ENCODE measurements at regions of chr5 and their contacts with region 1.

Region 1: GRCh38 chr5:122076664-122077365 is 1.2 kb downstream of the LOX start:
- DNase-seq: peak; percentile 94
- H3K4me3 Mint-ChIP-seq: peak overlapping the region; percentile 94
- H3K27ac Mint-ChIP-seq: peak overlapping the region; percentile 74
- H3K4me1 Mint-ChIP-seq: peaks cover 24% of the 10 kb centered on the region
- H3K27me3 Mint-ChIP-seq: no peaks in the 10 kb centered on the region
- CTCF ChIP-seq: peak; percentile 96

Region 2: DNA sequence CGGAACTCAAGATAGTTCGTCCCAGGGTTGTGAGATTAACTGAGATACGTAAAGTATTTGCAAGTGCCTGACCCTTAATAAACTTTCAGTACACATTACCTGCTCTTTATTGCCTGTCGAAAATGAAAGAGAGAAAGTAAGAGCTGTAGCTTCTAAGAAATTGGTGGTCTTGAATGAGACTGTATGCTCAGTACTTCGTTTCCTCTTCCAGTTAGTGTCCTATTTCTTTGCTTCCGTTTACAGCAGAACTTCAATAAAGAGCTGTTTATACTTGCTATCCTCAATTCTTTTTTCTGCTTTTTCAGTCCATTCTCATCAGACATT is 114.5 kb before region 1 on chr5:
- CTCF ChIA-PET with region 1: interaction called, 48 read pairs
- POLR2A ChIA-PET with region 1: interaction called, 84 read pairs
- intact Hi-C with region 1: loop called (anchors 1 kb)
- DNase-seq: no peak
- H3K4me3 Mint-ChIP-seq: peak overlapping the region; percentile 78
- H3K27ac Mint-ChIP-seq: peak overlapping the region; percentile 96
- H3K4me1 Mint-ChIP-seq: peaks cover 13% of the 10 kb centered on the region
- H3K27me3 Mint-ChIP-seq: no peaks in the 10 kb centered on the region
- CTCF ChIP-seq: no peak

Region 3: DNA sequence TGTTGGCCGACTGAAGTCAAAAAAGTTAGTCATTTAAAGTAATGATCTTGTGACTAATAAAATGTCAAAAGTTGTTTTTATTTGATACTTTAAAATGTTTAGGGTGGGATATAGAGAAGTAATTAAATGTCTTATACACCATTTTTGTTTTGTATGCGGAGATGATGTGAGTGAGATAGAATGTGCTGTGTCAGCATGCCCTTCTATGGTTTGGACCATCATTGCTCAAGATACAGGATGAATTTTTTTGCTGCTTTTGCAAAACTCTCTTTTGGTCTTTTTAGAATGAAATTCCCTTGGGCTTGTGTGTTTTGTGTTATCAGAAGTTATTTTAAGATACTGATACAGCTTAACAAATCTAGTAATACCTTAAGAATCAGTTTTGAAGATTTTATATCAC is 102.6 kb before region 1 on chr5:
- CTCF ChIA-PET with region 1: interaction called, 37 read pairs
- POLR2A ChIA-PET with region 1: interaction called, 53 read pairs
- intact Hi-C with region 1: loop called (anchors 1 kb)
- DNase-seq: peak; percentile 39
- H3K4me3 Mint-ChIP-seq: no peak overlapping the region
- H3K27ac Mint-ChIP-seq: no peak overlapping the region
- H3K4me1 Mint-ChIP-seq: peaks cover 12% of the 10 kb centered on the region
- H3K27me3 Mint-ChIP-seq: no peaks in the 10 kb centered on the region
- CTCF ChIP-seq: no peak

Region 4: GRCh38 chr5:122030251-122030650 is 46.6 kb before region 1 on chr5:
- CTCF ChIA-PET with region 1: interaction called, 16 read pairs
- POLR2A ChIA-PET with region 1: interaction called, 3 read pairs
- intact Hi-C with region 1: no loop called
- DNase-seq: no peak
- H3K4me3 Mint-ChIP-seq: no peak overlapping the region
- H3K27ac Mint-ChIP-seq: no peak overlapping the region
- H3K4me1 Mint-ChIP-seq: peaks cover 5% of the 10 kb centered on the region
- H3K27me3 Mint-ChIP-seq: no peaks in the 10 kb centered on the region
- CTCF ChIP-seq: no peak

Region 5: GRCh38 chr5:122063836-122064235 is 13.0 kb before region 1 on chr5:
- CTCF ChIA-PET with region 1: interaction called, 18 read pairs
- POLR2A ChIA-PET with region 1: interaction called, 13 read pairs
- intact Hi-C with region 1: no loop called
- DNase-seq: no peak
- H3K4me3 Mint-ChIP-seq: no peak overlapping the region
- H3K27ac Mint-ChIP-seq: no peak overlapping the region
- H3K4me1 Mint-ChIP-seq: peaks cover 5% of the 10 kb centered on the region
- H3K27me3 Mint-ChIP-seq: no peaks in the 10 kb centered on the region
- CTCF ChIP-seq: no peak

Region 6: GRCh38 chr5:122101636-122102285 is 24.9 kb after region 1 on chr5:
- CTCF ChIA-PET with region 1: interaction called, 18 read pairs
- POLR2A ChIA-PET with region 1: interaction called, 5 read pairs
- intact Hi-C with region 1: no loop called
- DNase-seq: peak; percentile 76
- H3K4me3 Mint-ChIP-seq: no peak overlapping the region
- H3K27ac Mint-ChIP-seq: peak overlapping the region; percentile 35
- H3K4me1 Mint-ChIP-seq: peaks cover 19% of the 10 kb centered on the region
- H3K27me3 Mint-ChIP-seq: no peaks in the 10 kb centered on the region
- CTCF ChIP-seq: peak; percentile 67

Region 7: GRCh38 chr5:122163121-122164069 is 86.6 kb after region 1 on chr5:
- CTCF ChIA-PET with region 1: interaction called, 63 read pairs
- POLR2A ChIA-PET with region 1: interaction called, 11 read pairs
- intact Hi-C with region 1: no loop called
- DNase-seq: peak; percentile 92
- H3K4me3 Mint-ChIP-seq: peak overlapping the region; percentile 22
- H3K27ac Mint-ChIP-seq: peak overlapping the region; percentile 81
- H3K4me1 Mint-ChIP-seq: peaks cover 23% of the 10 kb centered on the region
- H3K27me3 Mint-ChIP-seq: no peaks in the 10 kb centered on the region
- CTCF ChIP-seq: no peak

Region 8: DNA sequence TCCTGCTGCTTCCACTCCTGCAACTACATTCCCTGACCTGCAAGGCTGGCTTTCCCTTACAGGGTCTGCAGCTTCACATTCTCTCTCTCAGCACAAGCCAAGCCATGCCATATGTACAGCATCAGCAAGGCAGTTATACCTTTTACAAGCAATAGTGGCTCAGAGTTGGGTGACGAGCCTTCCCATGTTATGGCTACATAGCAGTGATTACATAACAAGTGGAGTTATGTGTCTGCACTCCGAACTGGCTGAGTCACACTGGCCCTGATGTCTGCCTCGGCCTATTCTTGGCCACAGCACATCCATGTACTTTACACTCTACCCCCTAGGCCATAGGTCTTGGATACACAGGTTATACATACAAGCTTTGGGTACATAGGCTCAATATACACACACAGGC is 183.2 kb after region 1 on chr5:
- CTCF ChIA-PET with region 1: no interaction called
- POLR2A ChIA-PET with region 1: no interaction called
- intact Hi-C with region 1: no loop called
- DNase-seq: peak; percentile 94
- H3K4me3 Mint-ChIP-seq: no peak overlapping the region
- H3K27ac Mint-ChIP-seq: no peak overlapping the region
- H3K4me1 Mint-ChIP-seq: peaks cover 30% of the 10 kb centered on the region
- H3K27me3 Mint-ChIP-seq: no peaks in the 10 kb centered on the region
- CTCF ChIP-seq: no peak

Measured in MCF 10A (cell line).